Activated CD4-positive, alpha-beta T cell treated with anti-CD3 and anti-CD28 coated beads for 36 hours (primary cell): ENCODE measurements at regions of chr3 and their contacts with region 1.

Region 1: DNA sequence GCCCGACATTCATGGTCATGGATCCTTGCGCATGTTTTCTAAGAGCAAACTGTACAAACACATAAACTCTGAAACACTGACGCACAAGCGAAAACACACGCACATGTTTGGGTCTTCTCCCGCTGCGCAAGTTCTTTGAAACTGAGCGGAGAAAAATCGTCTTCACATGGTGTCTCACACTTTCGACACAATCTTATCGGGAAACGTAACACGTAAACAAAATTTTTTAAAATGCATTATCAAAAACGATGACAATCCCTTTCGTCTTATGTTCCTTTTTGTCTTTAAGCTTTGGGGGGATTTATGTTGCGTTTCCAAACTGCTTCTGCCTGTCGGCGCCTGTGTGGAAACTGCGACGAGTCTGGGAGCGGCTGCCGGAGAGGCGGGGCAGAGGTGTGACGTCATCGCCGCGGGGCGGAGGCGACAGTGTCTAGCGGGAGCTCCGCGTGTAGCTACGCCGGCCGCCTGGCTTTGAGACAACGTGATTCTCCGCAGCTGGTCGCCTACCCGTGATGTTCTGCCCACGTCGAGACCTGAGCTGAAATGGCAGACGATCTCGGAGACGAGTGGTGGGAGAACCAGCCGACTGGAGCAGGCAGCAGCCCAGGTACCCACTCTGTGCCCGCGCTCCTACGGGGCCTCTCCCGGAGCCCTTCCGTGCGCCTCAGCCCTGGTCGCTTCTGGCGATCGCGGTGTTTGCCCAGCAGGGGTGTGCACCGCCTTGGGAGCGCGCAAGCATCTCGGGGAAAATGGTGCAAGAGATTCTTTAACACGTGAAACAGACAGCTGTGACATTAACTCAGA is at the start of gene CMSS1:
- DNase-seq: peak; percentile 98
- ATAC-seq: peak; percentile 92
- H3K4me3 Mint-ChIP-seq: peak within 1 kb of the TSS; percentile 85
- H3K27ac Mint-ChIP-seq: peak within 1 kb of the TSS; percentile 97
- H3K4me1 Mint-ChIP-seq: peaks cover 42% of the 10 kb centered on the region
- H3K27me3 Mint-ChIP-seq: no peaks in the 10 kb centered on the region
- total RNA-seq, gene CMSS1: 94.0 to 96.3 TPM

Region 2: GRCh38 chr3:97821810-97822775 is 1995.5 kb before region 1 on chr3 and contains the start of gene CRYBG3:
- CTCF ChIA-PET with region 1: no interaction called
- POLR2A ChIA-PET with region 1: no interaction called
- intact Hi-C with region 1: loop called in 1 of 2 experiments (anchors 5 kb)
- DNase-seq: peak; percentile 90
- ATAC-seq: peak; percentile 99
- H3K4me3 Mint-ChIP-seq: peak within 1 kb of the TSS; percentile 82
- H3K27ac Mint-ChIP-seq: peak within 1 kb of the TSS; percentile 66
- H3K4me1 Mint-ChIP-seq: peaks cover 18% of the 10 kb centered on the region
- H3K27me3 Mint-ChIP-seq: peaks cover 26% of the 10 kb centered on the region
- total RNA-seq, gene CRYBG3: 4.2 to 4.9 TPM

Region 3: GRCh38 chr3:99833617-99834205 is 16.1 kb after region 1 on chr3:
- CTCF ChIA-PET with region 1: interaction called, 28 read pairs
- POLR2A ChIA-PET with region 1: no interaction called
- intact Hi-C with region 1: no loop called
- DNase-seq: no peak
- ATAC-seq: no peak
- H3K4me3 Mint-ChIP-seq: no peak overlapping the region
- H3K27ac Mint-ChIP-seq: no peak overlapping the region
- H3K4me1 Mint-ChIP-seq: peaks cover 8% of the 10 kb centered on the region
- H3K27me3 Mint-ChIP-seq: no peaks in the 10 kb centered on the region

Region 4: DNA sequence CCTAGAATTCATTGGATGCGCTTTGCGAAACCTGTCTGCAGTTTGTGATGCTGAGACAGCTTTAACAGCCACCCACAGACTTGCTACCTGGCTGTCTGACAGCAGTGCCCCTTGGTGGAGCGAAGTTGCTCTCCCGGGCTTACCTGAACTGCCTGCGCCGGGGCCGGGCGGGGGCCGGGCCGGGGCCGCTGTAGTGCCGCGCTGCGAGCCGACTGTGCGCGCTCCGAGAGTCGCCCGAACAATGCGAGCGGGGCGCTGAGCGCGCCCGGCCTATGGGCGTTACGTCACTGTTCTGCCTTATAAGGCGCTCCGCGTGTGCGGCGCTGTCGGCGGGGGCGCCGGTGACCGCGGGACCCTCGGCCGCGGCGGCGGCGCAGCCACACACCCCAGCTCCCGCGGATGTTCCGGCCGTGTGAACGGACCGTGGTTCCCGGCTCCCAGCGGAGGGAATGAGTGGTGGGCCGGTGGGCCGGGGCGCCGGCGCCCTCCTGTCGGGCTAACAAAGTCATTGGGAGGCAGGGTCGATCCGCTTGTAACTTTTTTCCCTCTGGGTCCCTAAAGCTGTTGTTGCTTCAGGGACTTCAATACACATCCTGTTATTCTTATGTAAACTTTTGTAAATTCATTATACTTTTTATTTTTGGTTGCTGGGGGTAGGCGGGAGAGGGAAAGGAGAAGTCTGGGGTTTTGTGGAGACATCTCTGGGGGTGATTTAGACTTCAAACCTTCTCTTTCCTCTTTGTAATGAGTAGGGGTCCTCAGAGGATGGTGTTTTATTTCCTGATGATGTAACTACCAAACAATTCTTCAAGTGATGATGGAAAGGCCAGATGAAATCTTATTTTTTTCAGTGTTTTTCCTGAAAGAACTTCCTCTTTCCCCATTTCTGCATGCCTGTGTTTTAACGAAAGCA is 58.5 kb after region 1 on chr3:
- CTCF ChIA-PET with region 1: no interaction called
- POLR2A ChIA-PET with region 1: no interaction called
- intact Hi-C with region 1: loop called in 1 of 2 experiments (anchors 1 kb)
- DNase-seq: peak; percentile 79
- ATAC-seq: peak; percentile 93
- H3K4me3 Mint-ChIP-seq: peak overlapping the region; percentile 65
- H3K27ac Mint-ChIP-seq: no peak overlapping the region
- H3K4me1 Mint-ChIP-seq: peaks cover 21% of the 10 kb centered on the region
- H3K27me3 Mint-ChIP-seq: peaks cover 4% of the 10 kb centered on the region

Region 5: GRCh38 chr3:100492059-100493006 is 674.7 kb after region 1 on chr3 and contains the start of gene TMEM45A:
- CTCF ChIA-PET with region 1: no interaction called
- POLR2A ChIA-PET with region 1: no interaction called
- intact Hi-C with region 1: loop called in 1 of 2 experiments (anchors 10 kb)
- DNase-seq: peak; percentile 91
- ATAC-seq: peak; percentile 100
- H3K4me3 Mint-ChIP-seq: peak within 1 kb of the TSS; percentile 82
- H3K27ac Mint-ChIP-seq: peak within 1 kb of the TSS; percentile 77
- H3K4me1 Mint-ChIP-seq: peaks cover 6% of the 10 kb centered on the region
- H3K27me3 Mint-ChIP-seq: peaks cover 14% of the 10 kb centered on the region
- total RNA-seq, gene TMEM45A: 2.2 to 3.1 TPM